ENCODE measurements at regions of chr3 and their contacts with region 1.

Region 1: DNA sequence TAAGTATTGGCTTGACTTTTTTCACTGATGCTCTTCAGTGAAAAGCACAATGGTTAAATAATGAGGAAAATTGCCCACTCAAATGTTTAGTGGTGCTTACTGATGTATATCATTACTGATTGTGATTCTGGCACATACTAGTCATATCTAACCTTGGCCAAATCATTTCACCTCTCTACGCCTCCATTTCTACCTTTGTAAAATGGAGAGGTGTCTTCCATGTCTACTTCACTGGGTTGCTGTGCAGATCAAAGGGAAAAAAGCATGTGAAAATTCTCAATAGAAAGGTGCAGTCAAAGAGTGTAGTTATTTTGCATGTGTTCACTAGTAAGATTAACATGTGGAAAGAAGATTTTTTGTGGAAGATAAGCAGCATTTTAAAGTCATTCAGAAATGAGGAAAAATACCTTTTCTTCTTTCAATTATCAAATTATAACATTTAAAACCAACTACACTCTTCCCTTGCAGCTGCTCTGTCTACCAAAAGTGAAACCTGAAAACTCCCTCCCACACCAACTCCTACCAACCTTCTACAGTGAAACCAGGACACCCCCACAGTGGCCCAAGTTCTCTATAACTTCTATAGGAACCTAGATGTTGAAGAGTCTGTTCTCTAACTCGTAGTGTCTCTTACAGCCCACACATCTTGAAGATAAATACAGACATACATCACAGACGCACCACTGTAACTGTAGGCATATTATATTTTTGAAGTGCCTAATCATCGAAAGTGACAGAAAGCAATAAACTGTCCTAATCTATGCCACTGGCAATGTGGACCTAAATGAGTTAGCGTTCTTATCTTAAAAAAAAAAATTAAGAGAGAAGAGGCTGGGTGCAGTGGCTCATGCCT is 1.4 kb downstream of the CD200R1 start:
- DNase-seq: peak; percentile 54
- H3K4me3 Mint-ChIP-seq: peak overlapping the region; percentile 89
- H3K27ac Mint-ChIP-seq: peak overlapping the region; percentile 87
- H3K4me1 Mint-ChIP-seq: peaks cover 83% of the 10 kb centered on the region
- H3K27me3 Mint-ChIP-seq: no peaks in the 10 kb centered on the region

Region 2: GRCh38 chr3:111227216-111227615 is 1746.3 kb before region 1 on chr3:
- intact Hi-C with region 1: no loop called
- DNase-seq: no peak
- H3K4me3 Mint-ChIP-seq: no peak overlapping the region
- H3K27ac Mint-ChIP-seq: no peak overlapping the region
- H3K4me1 Mint-ChIP-seq: peaks cover 14% of the 10 kb centered on the region
- H3K27me3 Mint-ChIP-seq: peaks cover 4% of the 10 kb centered on the region

Region 3: DNA sequence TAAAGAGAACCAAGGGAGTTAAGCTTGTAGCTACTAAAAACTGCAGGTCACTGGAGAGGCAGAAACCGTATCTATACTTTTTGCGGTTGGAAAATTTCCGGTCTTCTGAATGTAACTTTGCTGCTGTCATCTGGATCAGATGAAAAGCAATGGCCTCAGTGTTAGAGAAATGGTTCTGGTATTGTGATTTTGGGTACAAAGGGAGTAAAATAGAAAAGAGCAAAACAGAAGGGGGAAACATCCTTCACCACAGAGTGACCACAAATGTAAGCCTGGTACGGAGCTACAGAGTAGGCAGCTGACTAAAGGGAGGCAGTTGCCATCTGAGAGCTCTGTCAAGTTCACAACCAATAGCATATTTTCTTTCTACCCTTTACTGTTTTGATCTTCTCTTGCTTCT is 1425.9 kb before region 1 on chr3:
- intact Hi-C with region 1: loop called (anchors 1 kb)
- DNase-seq: peak; percentile 48
- H3K4me3 Mint-ChIP-seq: no peak overlapping the region
- H3K27ac Mint-ChIP-seq: no peak overlapping the region
- H3K4me1 Mint-ChIP-seq: peaks cover 25% of the 10 kb centered on the region
- H3K27me3 Mint-ChIP-seq: no peaks in the 10 kb centered on the region

Region 4: GRCh38 chr3:112582244-112582874 is 391.2 kb before region 1 on chr3:
- intact Hi-C with region 1: loop called (anchors 1 kb)
- DNase-seq: no peak
- H3K4me3 Mint-ChIP-seq: no peak overlapping the region
- H3K27ac Mint-ChIP-seq: no peak overlapping the region
- H3K4me1 Mint-ChIP-seq: peaks cover 6% of the 10 kb centered on the region
- H3K27me3 Mint-ChIP-seq: no peaks in the 10 kb centered on the region

Region 5: DNA sequence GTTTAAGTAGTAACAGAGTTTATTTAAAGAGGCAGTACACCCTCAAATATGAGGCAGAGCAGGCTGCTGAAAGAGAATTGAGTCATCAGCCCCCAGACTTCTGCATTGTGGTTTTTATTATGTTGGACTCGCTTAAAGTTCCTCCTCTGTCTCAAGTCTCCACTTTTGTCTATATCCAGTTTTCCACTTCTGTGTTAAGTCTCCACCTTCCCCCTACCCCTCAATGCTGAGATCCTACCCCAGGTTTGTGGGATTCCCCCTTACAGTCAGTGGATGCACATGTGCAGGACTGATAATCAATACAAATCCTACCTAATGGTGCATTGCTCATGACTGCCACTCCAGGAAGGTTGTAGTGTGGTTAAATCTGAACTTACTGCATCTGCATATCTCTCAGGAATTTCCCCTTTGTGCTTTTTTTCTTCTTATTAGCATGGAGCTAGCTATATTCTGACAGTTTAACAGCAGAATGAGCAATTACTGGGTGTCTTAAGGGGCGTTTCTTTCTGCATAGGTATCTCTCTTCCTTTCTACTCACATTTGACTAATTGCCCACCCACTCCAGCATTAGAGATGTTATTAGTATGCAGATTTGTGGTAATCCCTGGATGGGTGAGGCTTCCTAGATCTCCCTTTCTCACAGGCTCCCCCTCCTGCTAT is 115.0 kb before region 1 on chr3:
- intact Hi-C with region 1: loop called (anchors 1 kb)
- DNase-seq: no peak
- H3K4me3 Mint-ChIP-seq: peak overlapping the region; percentile 13
- H3K27ac Mint-ChIP-seq: peak overlapping the region; percentile 71
- H3K4me1 Mint-ChIP-seq: peaks cover 35% of the 10 kb centered on the region
- H3K27me3 Mint-ChIP-seq: no peaks in the 10 kb centered on the region

Region 6: DNA sequence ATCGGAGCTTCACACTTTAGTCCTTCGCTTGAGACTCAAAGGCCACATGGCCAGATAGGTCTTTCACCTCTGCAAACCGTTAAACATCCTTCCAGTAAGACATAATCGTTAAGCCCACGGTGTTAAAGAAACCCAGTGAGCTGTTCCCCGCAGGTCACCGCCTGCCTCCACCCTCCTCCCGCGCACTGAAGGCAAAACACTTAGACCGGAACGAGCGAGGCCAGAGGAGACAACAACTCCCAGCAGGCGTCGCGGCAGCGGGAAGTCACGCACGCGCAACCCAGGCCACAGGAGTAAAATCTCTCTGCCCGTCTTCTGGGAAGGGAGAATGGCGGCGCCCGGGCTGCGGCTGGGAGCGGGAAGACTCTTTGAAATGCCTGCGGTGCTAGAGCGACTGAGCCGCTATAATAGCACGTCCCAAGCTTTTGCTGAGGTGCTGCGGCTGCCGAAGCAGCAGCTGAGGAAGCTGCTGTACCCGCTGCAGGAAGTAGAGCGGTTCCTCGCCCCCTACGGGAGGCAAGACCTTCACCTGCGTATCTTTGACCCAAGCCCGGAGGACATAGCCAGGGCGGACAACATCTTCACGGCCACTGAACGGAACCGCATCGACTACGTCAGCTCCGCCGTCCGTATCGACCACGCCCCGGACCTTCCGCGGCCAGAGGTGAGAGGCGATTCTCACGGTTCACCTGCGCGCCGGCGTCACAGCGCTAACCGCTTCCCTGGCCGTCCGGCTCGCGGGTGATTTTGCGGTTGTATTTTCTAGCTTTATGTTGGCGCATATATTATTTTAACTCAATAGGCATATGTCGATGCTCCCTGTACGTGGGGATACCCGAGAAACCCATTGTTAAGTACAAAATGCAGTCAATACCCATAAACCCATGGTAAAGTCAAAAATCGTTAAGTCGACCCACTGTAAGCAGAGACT is 17.4 kb after region 1 on chr3 and contains the start of gene GTPBP8:
- intact Hi-C with region 1: loop called (anchors 1 kb)
- DNase-seq: peak; percentile 81
- H3K4me3 Mint-ChIP-seq: peak within 1 kb of the TSS; percentile 90
- H3K27ac Mint-ChIP-seq: peak within 1 kb of the TSS; percentile 93
- H3K4me1 Mint-ChIP-seq: peaks cover 79% of the 10 kb centered on the region
- H3K27me3 Mint-ChIP-seq: no peaks in the 10 kb centered on the region
- total RNA-seq, gene GTPBP8: 22.6 and 25.0 TPM in 2 replicates

Region 7: GRCh38 chr3:113111011-113111707 is 137.6 kb after region 1 on chr3:
- intact Hi-C with region 1: loop called (anchors 5 kb)
- DNase-seq: peak; percentile 5
- H3K4me3 Mint-ChIP-seq: no peak overlapping the region
- H3K27ac Mint-ChIP-seq: peak overlapping the region; percentile 21
- H3K4me1 Mint-ChIP-seq: peaks cover 33% of the 10 kb centered on the region
- H3K27me3 Mint-ChIP-seq: no peaks in the 10 kb centered on the region

Measured in activated T-helper 1 cell treated with anti-CD3 and anti-CD28 coated beads, Interleukin-12 subunit alpha, Interleukin-12 subunit beta, Interleukin-2, Interleukin-4 antibody, amounts not matched to agents 30 ng/mL and 10 ng/mL and 1 ng/mL, durations not matched to agents 14 hours and 24 hours and 36 hours (primary cell).